Ovary (tissue), 10 donors: ENCODE measurements at regions of chr16 and their contacts with region 1.

Region 1: GRCh38 chr16:73068541-73069401 is 20.8 kb upstream of the ZFHX3 start:
- DNase-seq: no peak
- H3K4me3 ChIP-seq: no peak overlapping the region
- H3K27ac ChIP-seq: peak overlapping the region in 1 of 2 donors; percentile 26
- H3K4me1 ChIP-seq: peaks cover 2% of the 10 kb centered on the region
- H3K27me3 ChIP-seq: no peaks in the 10 kb centered on the region
- CTCF ChIP-seq: no peak
- EP300 ChIP-seq: no peak
- POLR2A ChIP-seq: no peak

Region 2: DNA sequence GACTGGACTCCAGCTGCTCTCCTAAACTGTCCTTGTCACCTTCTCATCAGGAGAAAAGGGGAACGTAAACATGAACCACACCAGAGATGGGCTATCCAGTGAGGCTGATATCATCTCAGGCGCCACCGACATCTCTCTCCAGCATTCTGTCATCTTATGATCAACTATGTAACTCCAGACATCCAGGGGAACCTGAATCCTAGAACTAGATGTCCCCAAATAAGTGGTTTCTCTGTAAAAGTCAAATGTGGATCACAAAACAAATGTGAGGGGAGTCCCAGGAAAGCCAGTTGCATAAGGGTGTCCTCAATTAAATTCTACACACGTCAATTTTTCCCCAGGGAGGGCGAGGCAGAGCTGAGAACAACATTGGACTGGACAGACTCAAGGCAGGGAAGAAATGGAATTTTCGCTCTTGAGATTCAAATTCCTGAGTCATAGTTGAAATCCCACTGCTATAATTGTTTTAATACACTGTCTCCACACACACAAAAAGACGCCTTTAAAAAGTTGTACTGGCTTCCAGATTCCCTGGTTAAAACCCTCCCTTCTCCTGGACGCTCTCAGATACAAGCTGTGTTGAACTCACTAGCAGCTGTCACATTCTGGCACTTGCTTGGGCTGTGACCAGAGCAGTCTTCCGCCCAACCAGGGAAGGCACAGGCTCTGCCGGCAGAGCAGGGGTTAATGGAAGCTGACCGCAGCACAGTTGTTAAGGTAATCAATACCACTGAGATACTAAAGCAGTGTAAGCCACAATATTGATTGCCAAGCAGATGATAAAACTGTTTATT is 83.4 kb before region 1 on chr16:
- intact Hi-C with region 1: no loop called
- DNase-seq: peak in 1 of 5 donors; percentile 39
- H3K4me3 ChIP-seq: no peak overlapping the region
- H3K27ac ChIP-seq: no peak overlapping the region
- H3K4me1 ChIP-seq: peaks cover 7% of the 10 kb centered on the region
- H3K27me3 ChIP-seq: no peaks in the 10 kb centered on the region
- CTCF ChIP-seq: no peak
- EP300 ChIP-seq: peak; percentile 90
- POLR2A ChIP-seq: no peak

Region 3: GRCh38 chr16:73172241-73172972 is 103.6 kb after region 1 on chr16:
- intact Hi-C with region 1: loop called in 1 of 4 experiments (anchors 10 kb)
- DNase-seq: peak; percentile 75 to 87 (median 80)
- H3K4me3 ChIP-seq: no peak overlapping the region
- H3K27ac ChIP-seq: peak overlapping the region; percentile 7 to 46
- H3K4me1 ChIP-seq: peaks cover 10% of the 10 kb centered on the region
- H3K27me3 ChIP-seq: no peaks in the 10 kb centered on the region
- CTCF ChIP-seq: no peak
- EP300 ChIP-seq: no peak
- POLR2A ChIP-seq: no peak

Region 4: GRCh38 chr16:73233846-73234424 is 165.2 kb after region 1 on chr16:
- intact Hi-C with region 1: no loop called
- DNase-seq: peak in 1 of 5 donors; percentile 17
- H3K4me3 ChIP-seq: no peak overlapping the region
- H3K27ac ChIP-seq: no peak overlapping the region
- H3K4me1 ChIP-seq: peaks cover 2% of the 10 kb centered on the region
- H3K27me3 ChIP-seq: no peaks in the 10 kb centered on the region
- CTCF ChIP-seq: no peak
- EP300 ChIP-seq: no peak
- POLR2A ChIP-seq: no peak